ENCODE measurements at regions of chr12 and their contacts with region 1.

Region 1: DNA sequence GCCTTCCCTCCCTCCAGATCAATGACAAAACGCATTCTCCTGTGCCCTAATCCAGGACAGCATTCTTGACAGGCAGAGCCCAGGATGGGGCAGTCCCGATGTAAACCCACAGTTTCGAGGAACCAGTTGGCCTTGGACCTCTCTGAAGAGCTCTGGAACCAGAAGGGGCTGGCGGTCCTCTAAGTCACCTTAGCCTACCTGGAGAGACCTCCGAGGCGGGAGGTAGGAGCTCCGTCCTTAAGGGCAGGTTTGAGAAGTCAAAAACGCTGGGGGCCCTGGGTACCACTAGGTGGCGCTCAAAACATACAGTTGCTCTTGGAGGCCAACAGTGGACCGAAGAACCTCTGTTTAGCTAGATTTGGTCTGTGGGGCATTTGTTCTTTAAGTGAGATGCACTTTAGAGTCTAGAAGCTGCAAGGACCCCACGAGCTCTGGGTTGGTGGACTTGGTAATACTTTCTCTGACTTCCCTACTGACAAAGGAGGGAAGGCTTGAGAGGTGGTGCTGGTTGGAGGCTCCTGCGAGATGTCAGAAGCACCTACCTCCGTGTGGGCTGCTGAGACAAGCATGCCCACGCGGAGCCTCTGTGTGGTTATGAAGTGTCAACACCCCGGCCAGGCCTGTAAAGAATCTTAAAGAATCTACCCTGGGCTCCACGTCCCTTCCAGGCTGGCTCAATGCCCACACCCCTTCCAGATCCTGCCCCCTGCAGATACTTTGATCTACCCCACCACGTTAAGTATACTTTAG is 74.8 kb upstream of the CHST11 start:
- DNase-seq: peak; percentile 87
- H3K4me3 Mint-ChIP-seq: no peak overlapping the region
- H3K27ac Mint-ChIP-seq: no peak overlapping the region
- H3K4me1 Mint-ChIP-seq: peaks cover 8% of the 10 kb centered on the region
- H3K27me3 Mint-ChIP-seq: peaks cover 33% of the 10 kb centered on the region

Region 2: DNA sequence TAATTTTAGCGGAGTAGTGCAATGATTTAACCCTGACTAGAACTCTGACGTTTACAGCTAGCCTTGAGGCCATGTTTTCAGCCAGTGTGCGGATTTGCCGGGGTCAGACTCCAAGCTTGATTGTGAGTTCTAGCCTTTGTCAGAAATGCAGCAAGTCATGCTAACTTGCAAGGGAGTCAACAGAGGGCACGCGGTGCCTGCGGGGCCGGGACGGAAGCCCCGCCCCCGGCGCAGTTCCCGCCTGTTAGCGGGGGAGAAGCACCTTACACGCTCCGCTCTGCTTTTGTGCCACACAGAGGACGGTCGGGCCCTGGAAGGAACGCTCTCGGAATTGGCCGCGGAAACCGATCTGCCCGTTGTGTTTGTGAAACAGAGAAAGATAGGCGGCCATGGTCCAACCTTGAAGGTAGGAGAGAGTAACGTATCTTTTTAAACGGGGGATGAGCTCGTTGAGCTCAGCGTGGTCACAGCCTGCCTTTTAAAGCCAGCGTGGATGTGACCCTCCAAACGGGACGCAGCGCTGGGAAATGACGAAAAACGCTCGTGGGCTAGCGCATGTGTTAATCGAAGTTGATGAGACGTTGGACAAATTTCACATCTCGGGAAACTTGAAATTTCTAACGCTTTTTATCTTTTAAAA is 93.2 kb before region 1 on chr12:
- CTCF ChIA-PET with region 1: no interaction called
- DNase-seq: peak; percentile 90
- H3K4me3 Mint-ChIP-seq: peak overlapping the region; percentile 90
- H3K27ac Mint-ChIP-seq: peak overlapping the region; percentile 98
- H3K4me1 Mint-ChIP-seq: peaks cover 44% of the 10 kb centered on the region
- H3K27me3 Mint-ChIP-seq: no peaks in the 10 kb centered on the region

Region 3: GRCh38 chr12:104371043-104371870 is 10.6 kb before region 1 on chr12:
- CTCF ChIA-PET with region 1: interaction called, 17 read pairs
- DNase-seq: no peak
- H3K4me3 Mint-ChIP-seq: no peak overlapping the region
- H3K27ac Mint-ChIP-seq: no peak overlapping the region
- H3K4me1 Mint-ChIP-seq: peaks cover 12% of the 10 kb centered on the region
- H3K27me3 Mint-ChIP-seq: peaks cover 5% of the 10 kb centered on the region

Region 4: GRCh38 chr12:104456417-104456949 is 74.6 kb after region 1 on chr12 and contains the start of gene CHST11:
- CTCF ChIA-PET with region 1: interaction called, 13 read pairs
- DNase-seq: peak; percentile 82
- H3K4me3 Mint-ChIP-seq: peak within 1 kb of the TSS; percentile 99
- H3K27ac Mint-ChIP-seq: peak within 1 kb of the TSS; percentile 96
- H3K4me1 Mint-ChIP-seq: peaks cover 39% of the 10 kb centered on the region
- H3K27me3 Mint-ChIP-seq: peaks cover 42% of the 10 kb centered on the region

Region 5: DNA sequence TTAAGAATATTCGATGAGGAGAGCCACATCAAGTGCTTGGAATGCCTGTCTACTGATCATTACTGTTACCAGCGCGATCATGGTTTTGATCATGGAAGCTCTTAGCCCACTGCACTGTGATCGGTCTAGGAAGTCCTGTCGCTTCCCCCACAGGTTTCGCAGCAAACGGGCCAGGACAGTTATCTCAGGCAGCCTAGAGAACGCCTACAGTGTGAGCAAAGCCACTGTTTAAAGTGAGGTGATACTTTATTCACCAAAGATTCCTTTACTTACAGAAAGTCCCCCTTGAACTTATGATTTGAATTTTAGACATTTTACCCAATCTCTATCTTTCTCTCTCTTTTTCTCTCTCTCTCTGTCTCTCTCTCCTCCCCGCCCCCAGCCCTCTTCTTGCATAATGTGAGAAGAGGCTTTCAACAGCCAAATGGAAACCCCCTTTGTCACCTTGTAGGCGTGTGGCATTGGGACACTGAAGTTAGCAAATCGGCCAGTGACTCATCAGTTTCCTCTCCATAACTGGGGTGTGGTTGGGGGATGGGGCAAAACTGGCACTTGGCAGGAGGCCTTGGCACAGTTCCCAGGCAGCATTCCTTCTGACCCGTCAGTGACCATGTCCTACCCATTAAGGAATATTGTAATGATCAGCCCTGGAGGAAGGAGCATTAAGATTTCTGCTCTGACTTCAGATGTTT is 289.6 kb after region 1 on chr12:
- CTCF ChIA-PET with region 1: interaction called, 12 read pairs
- DNase-seq: peak; percentile 67
- H3K4me3 Mint-ChIP-seq: peak overlapping the region; percentile 19
- H3K27ac Mint-ChIP-seq: peak overlapping the region; percentile 75
- H3K4me1 Mint-ChIP-seq: peaks cover 42% of the 10 kb centered on the region
- H3K27me3 Mint-ChIP-seq: no peaks in the 10 kb centered on the region

Region 6: GRCh38 chr12:104680066-104680465 is 298.2 kb after region 1 on chr12:
- CTCF ChIA-PET with region 1: interaction called, 15 read pairs
- DNase-seq: peak; percentile 60
- H3K4me3 Mint-ChIP-seq: no peak overlapping the region
- H3K27ac Mint-ChIP-seq: peak overlapping the region; percentile 76
- H3K4me1 Mint-ChIP-seq: peaks cover 61% of the 10 kb centered on the region
- H3K27me3 Mint-ChIP-seq: no peaks in the 10 kb centered on the region

Region 7: DNA sequence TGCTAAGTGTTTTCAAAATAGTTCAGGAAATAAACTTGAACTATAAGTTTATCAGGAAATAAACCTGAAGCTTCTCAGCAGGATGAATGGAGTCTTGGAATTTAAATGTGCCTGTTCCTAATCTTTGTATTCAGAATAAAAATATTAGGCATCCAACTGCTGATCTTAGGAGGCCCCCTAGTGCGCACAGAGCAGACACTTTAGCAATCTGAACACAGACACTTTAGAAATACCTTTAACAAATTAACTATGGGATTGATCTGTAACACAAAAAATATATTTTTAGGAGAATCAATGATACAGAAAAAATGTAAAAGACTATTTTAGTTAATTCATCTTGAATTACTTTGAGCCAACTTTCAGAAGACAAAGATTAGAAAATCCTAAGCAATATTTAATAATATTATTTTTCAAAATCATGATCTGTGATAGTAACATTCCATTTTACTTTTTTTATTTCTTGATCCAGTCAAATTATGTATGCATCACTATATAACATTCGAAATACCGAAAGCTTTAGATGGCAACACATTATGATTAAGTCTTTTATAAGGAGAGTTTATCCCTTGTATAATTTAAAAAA is 495.3 kb after region 1 on chr12:
- CTCF ChIA-PET with region 1: interaction called, 23 read pairs
- DNase-seq: peak; percentile 59
- H3K4me3 Mint-ChIP-seq: no peak overlapping the region
- H3K27ac Mint-ChIP-seq: no peak overlapping the region
- H3K4me1 Mint-ChIP-seq: peaks cover 6% of the 10 kb centered on the region
- H3K27me3 Mint-ChIP-seq: peaks cover 8% of the 10 kb centered on the region

Region 8: DNA sequence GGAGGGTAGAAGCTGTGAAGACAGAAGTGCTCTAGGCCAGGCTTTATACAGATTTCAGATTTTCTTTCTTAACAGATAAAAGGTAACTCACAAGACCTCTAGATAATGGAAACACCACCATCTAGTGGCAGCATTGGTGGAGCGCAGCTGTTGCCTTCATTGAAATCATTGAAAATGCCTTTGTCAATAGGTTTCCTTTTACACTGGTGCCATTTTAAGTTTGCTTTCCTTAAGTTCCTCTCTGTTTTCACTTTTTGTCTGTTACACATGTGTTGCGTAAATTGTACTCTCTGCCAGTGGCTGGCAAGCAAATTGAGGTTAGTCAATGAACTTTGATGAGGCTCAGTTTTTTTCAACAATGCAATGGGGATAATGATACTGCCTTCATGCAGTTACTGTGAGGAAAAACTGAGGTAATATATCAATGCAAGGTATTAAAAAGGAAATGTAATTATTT is 671.2 kb after region 1 on chr12:
- CTCF ChIA-PET with region 1: interaction called, 50 read pairs
- DNase-seq: peak; percentile 86
- H3K4me3 Mint-ChIP-seq: no peak overlapping the region
- H3K27ac Mint-ChIP-seq: no peak overlapping the region
- H3K4me1 Mint-ChIP-seq: peaks cover 2% of the 10 kb centered on the region
- H3K27me3 Mint-ChIP-seq: peaks cover 8% of the 10 kb centered on the region

Measured in activated naive CD4-positive, alpha-beta T cell treated with anti-CD3 and anti-CD28 coated beads, Interleukin-2, amount 10 ng/mL, durations not matched to agents 7 days and 5 days (primary cell).